ENCODE measurements at regions of chr1 and their contacts with region 1.

Region 1: GRCh38 chr1:79069828-79070227 is 63.3 kb upstream of the ADGRL4 start:
- DNase-seq: peak; percentile 4
- ATAC-seq: no peak
- H3K4me3 ChIP-seq: no peak overlapping the region
- H3K27ac ChIP-seq: no peak overlapping the region
- H3K4me1 ChIP-seq: peaks cover 2% of the 10 kb centered on the region; the same call in 1 of the 2 replicates
- H3K27me3 ChIP-seq: no peaks in the 10 kb centered on the region
- CTCF ChIP-seq: peak; percentile 51

Region 2: GRCh38 chr1:78825561-78825960 is 244.3 kb before region 1 on chr1:
- CTCF ChIA-PET with region 1: no interaction called
- POLR2A ChIA-PET with region 1: interaction called, 10 read pairs
- intact Hi-C with region 1: no loop called
- DNase-seq: no peak
- ATAC-seq: no peak
- H3K4me3 ChIP-seq: no peak overlapping the region
- H3K27ac ChIP-seq: no peak overlapping the region
- H3K4me1 ChIP-seq: peaks cover 6% of the 10 kb centered on the region
- H3K27me3 ChIP-seq: no peaks in the 10 kb centered on the region
- CTCF ChIP-seq: no peak

Region 3: GRCh38 chr1:78996791-78997190 is 73.0 kb before region 1 on chr1:
- CTCF ChIA-PET with region 1: no interaction called
- POLR2A ChIA-PET with region 1: no interaction called
- intact Hi-C with region 1: no loop called
- DNase-seq: no peak
- ATAC-seq: no peak
- H3K4me3 ChIP-seq: no peak overlapping the region
- H3K27ac ChIP-seq: no peak overlapping the region
- H3K4me1 ChIP-seq: no peaks in the 10 kb centered on the region
- H3K27me3 ChIP-seq: no peaks in the 10 kb centered on the region
- CTCF ChIP-seq: no peak

Region 4: DNA sequence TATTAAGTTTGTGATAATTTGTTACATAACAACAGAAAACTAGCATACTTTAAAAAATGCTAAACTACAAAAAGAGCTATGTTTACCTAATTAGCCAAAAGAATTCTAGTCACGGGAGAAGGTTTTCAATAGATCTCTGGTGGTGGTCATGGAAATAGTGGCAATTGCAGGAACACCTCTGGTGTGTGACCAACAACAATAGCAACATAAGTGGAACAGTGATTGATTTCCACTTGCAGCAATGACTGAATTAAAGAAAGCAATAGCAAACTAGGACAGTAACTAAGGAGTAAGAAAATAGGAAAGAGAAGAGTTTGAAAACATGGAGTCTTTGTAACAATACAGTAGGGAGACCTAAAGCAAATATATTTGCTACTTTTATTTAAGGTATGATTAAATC is 108.0 kb after region 1 on chr1:
- CTCF ChIA-PET with region 1: no interaction called
- POLR2A ChIA-PET with region 1: no interaction called
- intact Hi-C with region 1: no loop called
- DNase-seq: no peak
- ATAC-seq: no peak
- H3K4me3 ChIP-seq: no peak overlapping the region
- H3K27ac ChIP-seq: no peak overlapping the region
- H3K4me1 ChIP-seq: no peaks in the 10 kb centered on the region
- H3K27me3 ChIP-seq: no peaks in the 10 kb centered on the region
- CTCF ChIP-seq: no peak

Measured in PC-3 (cell line).